CD4-positive, alpha-beta T cell (primary cell): ENCODE measurements at regions of chr3 and their contacts with region 1.

Region 1: DNA sequence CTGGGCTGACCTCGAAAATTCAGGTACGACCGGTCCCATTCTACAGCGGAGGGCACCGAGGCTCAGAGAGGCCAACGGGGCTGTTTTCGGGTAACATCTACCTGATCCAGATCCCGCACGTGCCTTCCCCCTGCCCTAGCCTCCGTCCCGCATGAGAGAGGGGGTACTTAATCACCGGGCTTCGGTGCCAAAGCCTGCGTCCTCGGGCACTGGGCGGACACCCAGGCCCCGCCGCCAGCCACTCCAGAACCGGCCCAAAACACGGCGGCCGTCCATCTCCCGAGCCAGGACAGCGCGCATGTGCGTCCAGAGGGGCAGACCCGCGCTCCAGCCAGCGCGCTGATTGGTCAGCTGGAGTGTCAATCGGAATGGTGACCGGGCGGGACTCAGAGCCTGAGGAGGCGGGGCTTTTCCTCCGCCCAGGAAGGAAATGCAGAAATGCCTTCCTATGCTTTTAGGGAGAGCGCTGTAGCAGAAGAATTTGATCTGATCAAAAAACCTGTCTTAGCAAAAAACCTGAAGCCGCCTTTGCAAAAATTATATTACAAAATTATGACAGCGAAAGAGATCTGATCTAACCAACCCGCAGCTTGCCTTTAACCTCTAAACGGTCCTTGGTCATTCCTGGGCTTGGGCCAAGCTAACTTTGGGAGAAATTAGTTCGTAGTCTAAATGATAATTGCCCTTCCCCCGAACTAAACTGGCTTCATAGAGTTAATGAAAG is at the start of gene RPUSD3:
- DNase-seq: peak; percentile 93 to 98 (median 96)
- ATAC-seq: peak; percentile 98
- H3K4me3 ChIP-seq: peak within 1 kb of the TSS; percentile 73
- H3K4me3 Mint-ChIP-seq: peak within 1 kb of the TSS; percentile 98
- H3K27ac ChIP-seq: peak within 1 kb of the TSS; percentile 21 to 38
- H3K27ac Mint-ChIP-seq: peak within 1 kb of the TSS; percentile 80
- H3K4me1 ChIP-seq: peaks cover 28% of the 10 kb centered on the region
- H3K4me1 Mint-ChIP-seq: peaks cover 28% of the 10 kb centered on the region
- H3K27me3 ChIP-seq: no peaks in the 10 kb centered on the region
- H3K27me3 Mint-ChIP-seq: no peaks in the 10 kb centered on the region
- CTCF ChIP-seq: no peak
- total RNA-seq, gene RPUSD3: 7.9 to 8.1 TPM

Region 2: GRCh38 chr3:9468460-9468859 is 375.4 kb before region 1 on chr3:
- CTCF ChIA-PET with region 1: no interaction called
- POLR2A ChIA-PET with region 1: no interaction called
- intact Hi-C with region 1: no loop called
- DNase-seq: no peak
- ATAC-seq: no peak
- H3K4me3 ChIP-seq: no peak overlapping the region
- H3K4me3 Mint-ChIP-seq: no peak overlapping the region
- H3K27ac ChIP-seq: no peak overlapping the region
- H3K27ac Mint-ChIP-seq: no peak overlapping the region
- H3K4me1 ChIP-seq: no peaks in the 10 kb centered on the region
- H3K4me1 Mint-ChIP-seq: no peaks in the 10 kb centered on the region
- H3K27me3 ChIP-seq: no peaks in the 10 kb centered on the region
- H3K27me3 Mint-ChIP-seq: no peaks in the 10 kb centered on the region
- CTCF ChIP-seq: no peak

Region 3: DNA sequence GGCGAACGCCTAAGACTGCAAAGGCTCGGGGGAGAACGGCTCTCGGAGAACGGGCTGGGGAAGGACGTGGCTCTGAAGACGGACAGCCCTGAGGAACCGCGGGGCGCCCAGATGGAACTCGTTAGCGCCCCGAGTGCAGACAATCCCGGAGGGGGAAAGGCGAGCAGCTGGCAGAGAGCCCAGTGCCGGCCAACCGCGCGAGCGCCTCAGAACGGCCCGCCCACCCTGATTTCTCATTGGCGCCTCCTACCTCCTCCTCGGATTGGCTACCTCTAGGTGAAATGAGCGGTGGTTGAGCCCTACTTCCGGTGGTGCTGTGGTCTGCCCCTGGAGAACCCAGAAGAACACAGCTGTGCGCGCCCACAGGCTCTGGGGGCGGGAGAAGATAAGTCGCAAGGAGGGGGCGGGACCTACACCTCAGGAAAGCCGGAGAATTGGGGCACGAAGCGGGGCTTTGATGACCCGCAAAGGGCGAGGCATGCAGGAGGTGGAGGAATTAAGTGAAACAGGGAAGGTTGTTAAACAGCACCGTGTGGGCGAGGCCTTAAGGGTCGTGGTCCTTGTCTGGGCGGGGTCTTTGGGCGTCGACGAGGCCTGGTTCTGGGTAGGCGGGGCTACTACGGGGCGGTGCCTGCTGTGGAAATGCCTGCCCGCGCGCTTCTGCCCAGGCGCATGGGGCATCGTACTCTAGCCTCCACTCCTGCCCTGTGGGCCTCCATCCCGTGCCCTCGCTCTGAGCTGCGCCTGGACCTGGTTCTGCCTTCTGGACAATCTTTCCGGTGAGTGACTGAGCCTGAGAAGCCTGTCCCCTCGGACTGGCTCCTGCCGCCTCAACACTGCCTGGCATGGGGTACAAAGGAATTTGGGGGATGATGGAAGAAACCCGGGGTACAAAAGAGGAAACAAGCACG is 94.0 kb before region 1 on chr3 and contains the start of gene OGG1:
- CTCF ChIA-PET with region 1: no interaction called
- POLR2A ChIA-PET with region 1: no interaction called
- intact Hi-C with region 1: loop called in 1 of 2 experiments (anchors 2 kb)
- DNase-seq: peak; percentile 84 to 98 (median 91)
- ATAC-seq: peak; percentile 94
- H3K4me3 ChIP-seq: peak within 1 kb of the TSS; percentile 82
- H3K4me3 Mint-ChIP-seq: peak within 1 kb of the TSS; percentile 95
- H3K27ac ChIP-seq: peak within 1 kb of the TSS; percentile 69 to 74
- H3K27ac Mint-ChIP-seq: peak within 1 kb of the TSS; percentile 85
- H3K4me1 ChIP-seq: peaks cover 37% of the 10 kb centered on the region
- H3K4me1 Mint-ChIP-seq: peaks cover 48% of the 10 kb centered on the region
- H3K27me3 ChIP-seq: no peaks in the 10 kb centered on the region
- H3K27me3 Mint-ChIP-seq: no peaks in the 10 kb centered on the region
- CTCF ChIP-seq: no peak
- total RNA-seq, gene OGG1: 7.1 to 8.9 TPM

Region 4: GRCh38 chr3:9761919-9762318 is 82.0 kb before region 1 on chr3:
- CTCF ChIA-PET with region 1: no interaction called
- POLR2A ChIA-PET with region 1: no interaction called
- intact Hi-C with region 1: no loop called
- DNase-seq: no peak
- ATAC-seq: no peak
- H3K4me3 ChIP-seq: no peak overlapping the region
- H3K4me3 Mint-ChIP-seq: no peak overlapping the region
- H3K27ac ChIP-seq: no peak overlapping the region
- H3K27ac Mint-ChIP-seq: no peak overlapping the region
- H3K4me1 ChIP-seq: peaks cover under 1% of the 10 kb centered on the region
- H3K4me1 Mint-ChIP-seq: no peaks in the 10 kb centered on the region
- H3K27me3 ChIP-seq: no peaks in the 10 kb centered on the region
- H3K27me3 Mint-ChIP-seq: no peaks in the 10 kb centered on the region
- CTCF ChIP-seq: no peak

Region 5: DNA sequence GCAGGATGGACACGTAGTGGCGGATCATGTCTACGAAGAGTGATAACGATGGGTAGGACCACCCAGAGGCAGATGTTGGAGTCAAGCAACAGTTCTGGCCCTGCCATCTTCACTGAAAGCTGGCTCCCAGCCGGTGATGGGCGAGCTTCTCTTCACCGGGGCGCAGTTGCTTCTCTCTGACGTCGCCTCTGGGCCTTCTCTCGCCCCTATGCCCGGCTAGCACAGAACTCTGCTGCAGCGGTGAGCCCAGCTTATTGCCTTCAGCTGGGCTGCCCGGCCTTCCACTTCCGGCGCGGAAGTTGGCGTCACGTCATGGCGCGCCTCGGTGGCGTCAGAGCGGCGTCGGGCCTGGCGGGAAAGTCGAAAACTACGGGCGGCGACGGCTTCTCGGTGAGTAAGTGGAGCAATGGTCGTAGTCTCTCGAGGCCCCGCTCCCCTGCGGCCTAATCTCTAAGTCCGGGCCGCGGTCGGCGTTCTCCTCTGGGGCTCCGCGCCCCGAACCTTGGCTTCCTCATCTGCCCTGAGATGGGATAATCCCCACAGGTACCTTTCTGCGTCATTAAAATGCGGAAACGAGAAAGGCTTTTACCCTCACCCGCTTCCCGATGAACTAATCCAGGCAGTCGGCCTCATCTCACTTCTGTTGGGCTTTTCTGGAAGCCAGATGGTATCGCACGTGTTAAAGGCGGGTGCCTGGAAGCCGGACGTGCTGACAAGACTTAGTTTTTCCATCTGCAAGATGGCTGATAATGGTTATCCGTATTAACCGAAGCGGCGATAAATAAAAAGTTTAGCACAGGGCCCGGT is 182.4 kb after region 1 on chr3 and contains the start of gene FANCD2:
- CTCF ChIA-PET with region 1: no interaction called
- POLR2A ChIA-PET with region 1: no interaction called
- intact Hi-C with region 1: no loop called
- DNase-seq: peak; percentile 82 to 97 (median 91)
- ATAC-seq: peak; percentile 91
- H3K4me3 ChIP-seq: peak within 1 kb of the TSS; percentile 87
- H3K4me3 Mint-ChIP-seq: peak within 1 kb of the TSS; percentile 98
- H3K27ac ChIP-seq: peak within 1 kb of the TSS; percentile 70 to 84
- H3K27ac Mint-ChIP-seq: peak within 1 kb of the TSS; percentile 98
- H3K4me1 ChIP-seq: peaks cover 33% of the 10 kb centered on the region
- H3K4me1 Mint-ChIP-seq: peaks cover 35% of the 10 kb centered on the region
- H3K27me3 ChIP-seq: no peaks in the 10 kb centered on the region
- H3K27me3 Mint-ChIP-seq: no peaks in the 10 kb centered on the region
- CTCF ChIP-seq: no peak
- total RNA-seq, gene FANCD2: 13.8 to 16.8 TPM

Region 6: DNA sequence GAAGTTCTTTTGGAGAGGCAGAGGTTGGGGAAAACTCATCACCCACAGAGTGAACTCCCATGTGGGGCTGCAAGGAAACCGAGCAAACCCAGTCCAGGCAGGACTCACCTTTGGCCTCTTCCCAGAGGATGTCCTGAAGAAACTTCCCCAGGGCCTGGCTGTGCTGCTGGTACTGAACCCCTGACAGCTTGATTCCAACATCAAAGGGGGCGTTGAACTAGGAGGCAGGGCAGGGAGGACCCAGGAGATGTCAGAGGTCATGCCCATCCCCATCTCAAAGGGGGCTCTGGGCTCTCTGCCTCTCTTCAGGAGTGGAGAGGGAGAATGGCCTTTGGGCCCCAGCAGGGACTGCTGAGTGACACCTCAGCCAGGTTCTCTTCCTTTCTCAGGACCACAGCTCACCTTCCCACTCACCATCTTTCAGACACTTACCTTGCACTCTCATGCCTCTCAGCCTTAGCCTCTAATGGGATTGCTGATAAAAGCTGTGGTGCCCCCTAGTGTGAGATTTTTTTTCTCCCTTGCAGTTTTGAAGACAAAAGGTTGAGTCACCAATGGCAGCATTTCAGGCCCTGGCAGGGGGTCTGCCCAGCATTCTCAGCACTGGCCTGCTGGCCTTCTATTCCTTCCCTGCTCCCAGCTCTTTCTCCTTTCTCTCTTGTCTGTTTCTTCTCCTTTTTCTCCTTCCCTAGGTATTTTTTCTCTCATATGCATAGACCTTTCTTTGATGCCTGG is 442.9 kb after region 1 on chr3:
- CTCF ChIA-PET with region 1: no interaction called
- POLR2A ChIA-PET with region 1: no interaction called
- intact Hi-C with region 1: loop called in 1 of 2 experiments (anchors 10 kb)
- DNase-seq: peak in 5 of 14 experiments; percentile 28 to 71 (median 61)
- ATAC-seq: peak; percentile 39
- H3K4me3 ChIP-seq: no peak overlapping the region
- H3K4me3 Mint-ChIP-seq: no peak overlapping the region
- H3K27ac ChIP-seq: peak overlapping the region in 1 of 2 donors; percentile 21
- H3K27ac Mint-ChIP-seq: peak overlapping the region; percentile 50
- H3K4me1 ChIP-seq: peaks cover 19% of the 10 kb centered on the region
- H3K4me1 Mint-ChIP-seq: peaks cover 39% of the 10 kb centered on the region
- H3K27me3 ChIP-seq: no peaks in the 10 kb centered on the region
- H3K27me3 Mint-ChIP-seq: no peaks in the 10 kb centered on the region
- CTCF ChIP-seq: peak; percentile 52